ENCODE measurements at regions of chr15 and their contacts with region 1.

Region 1: DNA sequence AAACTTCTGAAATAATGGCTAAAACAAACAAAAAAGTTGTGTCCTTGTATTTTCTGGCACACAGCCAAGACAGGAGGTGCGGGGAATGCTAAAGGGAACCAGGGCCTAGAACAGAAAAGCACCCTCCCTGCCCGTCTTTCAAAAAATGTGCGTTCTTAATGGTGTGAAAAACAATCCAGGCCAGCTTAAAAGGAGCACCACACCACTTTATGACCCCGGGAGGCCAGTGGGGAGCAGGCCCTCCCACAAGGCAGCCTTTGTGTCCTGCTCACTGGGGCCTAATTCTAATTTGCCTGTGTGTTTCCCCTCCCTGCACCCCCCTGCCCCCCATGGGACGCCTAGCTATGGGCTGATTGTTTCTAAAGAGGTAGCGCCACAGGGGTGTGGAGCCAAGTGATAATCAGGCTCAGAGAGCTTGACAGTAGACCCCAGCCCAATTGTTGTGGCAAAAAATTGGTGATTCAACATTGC is 181.4 kb downstream of the GREM1 start:
- DNase-seq: no peak
- ATAC-seq: peak; percentile 92
- H3K4me3 ChIP-seq: no peak overlapping the region
- H3K27ac ChIP-seq: no peak overlapping the region
- H3K4me1 ChIP-seq: no peaks in the 10 kb centered on the region; the same call in 1 of the 2 replicates
- H3K27me3 ChIP-seq: no peaks in the 10 kb centered on the region
- CTCF ChIP-seq: no peak
- EP300 ChIP-seq: no peak
- POLR2A ChIP-seq: no peak
- RAD21 ChIP-seq: no peak

Region 2: GRCh38 chr15:32774022-32774421 is 125.1 kb before region 1 on chr15:
- CTCF ChIA-PET with region 1: no interaction called
- POLR2A ChIA-PET with region 1: no interaction called
- RAD21 ChIA-PET with region 1: no interaction called
- SMC1A ChIA-PET with region 1: no interaction called
- in situ Hi-C with region 1: no loop called
- intact Hi-C with region 1: no loop called
- DNase-seq: no peak
- ATAC-seq: no peak
- H3K4me3 ChIP-seq: no peak overlapping the region
- H3K27ac ChIP-seq: no peak overlapping the region
- H3K4me1 ChIP-seq: no peaks in the 10 kb centered on the region
- H3K27me3 ChIP-seq: no peaks in the 10 kb centered on the region; a peak in 1 of 4 replicates
- CTCF ChIP-seq: no peak
- EP300 ChIP-seq: no peak
- POLR2A ChIP-seq: no peak
- RAD21 ChIP-seq: no peak

Region 3: GRCh38 chr15:32936283-32936918 is 37.2 kb after region 1 on chr15:
- CTCF ChIA-PET with region 1: interaction called, 18 read pairs
- POLR2A ChIA-PET with region 1: no interaction called
- RAD21 ChIA-PET with region 1: interaction called, 12 read pairs
- SMC1A ChIA-PET with region 1: interaction called, 7 read pairs
- in situ Hi-C with region 1: no loop called
- intact Hi-C with region 1: no loop called
- DNase-seq: no peak
- ATAC-seq: peak; percentile 56; the same call in 2 of the 3 replicates
- H3K4me3 ChIP-seq: no peak overlapping the region
- H3K27ac ChIP-seq: no peak overlapping the region
- H3K4me1 ChIP-seq: no peaks in the 10 kb centered on the region
- H3K27me3 ChIP-seq: peaks cover 0 to 2% of the 10 kb centered on the region in 2 experiments; a peak in 1 of 4 replicates
- CTCF ChIP-seq: peak; percentile 53 to 67 (median 66); a peak in 5 of 6 replicates
- EP300 ChIP-seq: no peak
- POLR2A ChIP-seq: no peak
- RAD21 ChIP-seq: peak; percentile 53